ENCODE measurements at regions of chr6 and their contacts with region 1.

Region 1: DNA sequence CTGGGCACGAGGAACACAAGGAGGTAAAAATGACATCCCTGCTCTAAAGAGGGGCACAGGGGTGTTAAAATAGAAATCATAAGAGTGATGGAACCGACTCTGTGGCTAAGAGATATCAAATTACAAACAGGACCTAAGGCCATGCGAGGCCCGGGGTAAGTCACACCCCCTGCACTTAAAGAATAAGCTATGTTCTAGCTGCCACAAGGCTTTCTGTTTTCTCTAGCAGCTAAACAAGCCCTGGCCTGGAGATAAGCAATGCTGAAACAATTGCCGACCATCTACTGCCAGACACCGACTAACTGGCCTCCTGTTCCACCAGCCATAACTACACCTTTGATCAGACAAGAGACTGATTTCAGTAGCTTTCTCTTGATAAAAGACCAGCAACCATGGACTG is 32.4 kb downstream of the MDGA1 start:
- DNase-seq: no peak
- ATAC-seq: no peak
- H3K4me3 ChIP-seq: no peak overlapping the region
- H3K27ac ChIP-seq: no peak overlapping the region
- H3K4me1 ChIP-seq: no peaks in the 10 kb centered on the region
- H3K27me3 ChIP-seq: peaks cover 0 to 2% of the 10 kb centered on the region in 2 experiments; a peak in 1 of 4 replicates
- CTCF ChIP-seq: no peak
- EP300 ChIP-seq: no peak
- POLR2A ChIP-seq: no peak
- RAD21 ChIP-seq: no peak

Region 2: DNA sequence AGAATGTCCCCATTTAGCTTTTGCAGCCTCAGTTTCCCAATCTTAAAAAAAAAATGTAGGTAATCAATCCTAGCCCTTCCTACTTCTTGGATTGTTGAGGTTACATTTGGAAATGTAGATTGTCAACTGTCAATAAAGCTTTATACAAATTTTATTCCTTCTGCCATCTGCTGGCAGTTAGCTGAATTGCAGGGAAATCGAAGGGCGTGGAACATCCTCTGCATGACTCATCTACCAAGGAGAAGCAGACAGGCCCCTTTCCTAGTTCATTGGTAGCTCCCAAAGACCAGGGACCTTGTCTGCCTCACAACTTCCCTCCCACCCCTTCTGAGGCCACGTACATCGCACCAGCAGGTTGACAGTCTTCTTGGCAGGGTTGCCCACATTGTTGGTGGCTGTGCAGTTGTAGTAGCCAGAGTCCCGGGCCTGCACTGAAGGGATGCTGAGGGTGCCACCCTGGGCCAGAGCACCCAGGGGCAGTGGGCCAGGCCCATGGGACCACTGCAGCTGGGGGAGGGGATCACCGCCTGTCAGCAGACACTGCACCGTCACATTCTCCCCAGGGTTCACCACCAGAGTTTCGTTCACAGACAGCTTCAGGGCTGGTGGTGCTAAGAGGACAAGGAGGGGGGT is 11.3 kb before region 1 on chr6:
- CTCF ChIA-PET with region 1: interaction called, 19 read pairs
- POLR2A ChIA-PET with region 1: interaction called, 3 read pairs
- RAD21 ChIA-PET with region 1: no interaction called
- SMC1A ChIA-PET with region 1: interaction called, 4 read pairs
- in situ Hi-C with region 1: no loop called
- intact Hi-C with region 1: no loop called
- DNase-seq: peak; percentile 19
- ATAC-seq: peak; percentile 54
- H3K4me3 ChIP-seq: no peak overlapping the region
- H3K27ac ChIP-seq: no peak overlapping the region
- H3K4me1 ChIP-seq: no peaks in the 10 kb centered on the region; the same call in 1 of the 2 replicates
- H3K27me3 ChIP-seq: peaks cover 2 to 3% of the 10 kb centered on the region in 2 experiments; a peak in 3 of 4 replicates
- CTCF ChIP-seq: peak; percentile 33 to 88 (median 57)
- EP300 ChIP-seq: no peak
- POLR2A ChIP-seq: no peak
- RAD21 ChIP-seq: 0 out of 2 replicates have a peak, but pooled peaks have one; percentile 26

Region 3: DNA sequence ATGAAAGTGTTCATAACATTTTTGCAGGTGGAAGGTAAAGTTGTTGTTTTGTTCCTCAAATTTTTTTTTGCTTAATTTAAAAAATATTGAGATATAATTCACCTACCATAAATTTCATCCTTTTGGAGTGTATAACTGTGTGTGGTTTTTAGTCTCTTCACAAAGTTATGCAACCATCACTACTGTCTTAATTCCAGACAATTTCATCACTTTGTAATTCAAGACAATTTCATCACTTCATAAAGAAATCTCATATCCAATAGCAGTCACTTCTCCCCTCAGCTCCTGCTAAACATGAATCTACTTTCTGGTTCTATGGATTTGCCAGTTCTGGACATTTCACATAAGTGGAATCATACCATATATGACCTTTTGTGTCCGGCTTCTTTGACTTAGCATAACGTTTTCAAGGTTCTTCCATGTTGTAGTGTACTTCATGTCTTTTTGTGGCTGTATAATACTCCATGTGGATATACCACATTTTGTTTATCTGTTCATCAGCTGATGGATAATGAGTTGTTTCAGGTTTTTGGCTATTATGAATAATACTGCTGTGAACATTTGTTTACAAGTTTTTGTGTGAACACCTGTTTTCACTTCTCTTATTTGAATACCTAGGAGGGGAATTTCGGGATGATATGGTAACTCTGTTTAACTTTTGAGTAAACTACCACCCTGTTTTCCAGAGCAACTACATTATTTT is 173.1 kb after region 1 on chr6:
- CTCF ChIA-PET with region 1: no interaction called
- POLR2A ChIA-PET with region 1: no interaction called
- RAD21 ChIA-PET with region 1: no interaction called
- SMC1A ChIA-PET with region 1: no interaction called
- in situ Hi-C with region 1: no loop called
- intact Hi-C with region 1: no loop called
- DNase-seq: no peak
- ATAC-seq: peak; percentile 26
- H3K4me3 ChIP-seq: no peak overlapping the region
- H3K27ac ChIP-seq: peak overlapping the region; percentile 48; the same call in 1 of the 2 replicates
- H3K4me1 ChIP-seq: peaks cover 15% of the 10 kb centered on the region
- H3K27me3 ChIP-seq: no peaks in the 10 kb centered on the region
- CTCF ChIP-seq: no peak
- EP300 ChIP-seq: no peak
- POLR2A ChIP-seq: no peak
- RAD21 ChIP-seq: no peak